Sigmoid colon (tissue), 7 donors: ENCODE measurements at regions of chrX and their contacts with region 1.

Region 1: DNA sequence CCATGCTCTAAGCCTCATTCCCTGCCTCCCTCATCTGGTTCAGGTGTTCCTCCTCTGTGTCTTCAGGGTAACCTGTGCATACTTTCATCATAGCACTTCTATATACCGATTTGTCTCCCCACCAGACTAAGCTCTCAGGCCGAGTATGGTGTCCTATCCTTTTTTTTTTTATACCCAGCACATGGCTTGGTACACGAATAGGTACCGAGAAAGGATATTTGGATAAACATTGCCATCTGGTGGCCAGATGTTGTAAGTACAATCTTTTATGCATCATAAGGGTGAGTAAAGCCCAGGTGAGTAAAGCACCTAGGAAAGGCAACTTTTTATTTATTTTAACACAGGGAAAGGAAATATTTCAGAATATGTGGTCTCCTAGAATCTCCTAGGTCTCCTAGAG is 68.4 kb downstream of the MID2 start:
- DNase-seq: no peak
- H3K4me3 ChIP-seq: no peak overlapping the region
- H3K27ac ChIP-seq: no peak overlapping the region
- H3K4me1 ChIP-seq: no peaks in the 10 kb centered on the region
- H3K27me3 ChIP-seq: no peaks in the 10 kb centered on the region
- CTCF ChIP-seq: peak; percentile 23 to 45 (median 30)
- EP300 ChIP-seq: no peak
- POLR2A ChIP-seq: no peak

Region 2: GRCh38 chrX:107654872-107655761 is 238.9 kb before region 1 on chrX:
- intact Hi-C with region 1: loop called (anchors 5 kb)
- DNase-seq: peak; percentile 88
- H3K4me3 ChIP-seq: peak overlapping the region in 1 of 4 donors; percentile 9
- H3K27ac ChIP-seq: peak overlapping the region; percentile 10 to 60 (median 36)
- H3K4me1 ChIP-seq: peaks cover 0 to 13% (median 4%) of the 10 kb centered on the region in 4 donors
- H3K27me3 ChIP-seq: no peaks in the 10 kb centered on the region
- CTCF ChIP-seq: peak; percentile 43 to 66 (median 58)
- EP300 ChIP-seq: no peak
- POLR2A ChIP-seq: no peak

Region 3: DNA sequence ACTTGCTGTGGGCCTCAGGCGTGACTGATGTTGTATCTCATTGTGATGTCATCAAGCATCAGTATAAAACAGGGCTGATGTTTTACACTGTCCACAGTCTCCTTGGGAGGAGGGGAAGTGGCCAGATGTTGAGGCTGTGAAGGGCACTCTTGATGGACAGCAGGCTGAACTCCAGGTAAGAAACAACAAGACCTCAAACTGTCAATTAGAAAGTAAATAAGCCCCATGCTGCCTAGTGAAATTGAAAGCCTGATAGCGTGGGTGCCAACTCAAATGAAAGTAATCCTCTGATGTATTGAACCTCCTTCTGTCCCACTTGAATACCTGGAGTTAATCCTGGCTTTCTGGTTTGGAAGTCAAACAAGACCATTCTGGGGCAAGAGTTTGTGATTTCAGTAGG is 170.6 kb after region 1 on chrX:
- intact Hi-C with region 1: no loop called
- DNase-seq: no peak
- H3K4me3 ChIP-seq: no peak overlapping the region
- H3K27ac ChIP-seq: no peak overlapping the region
- H3K4me1 ChIP-seq: no peaks in the 10 kb centered on the region
- H3K27me3 ChIP-seq: no peaks in the 10 kb centered on the region
- CTCF ChIP-seq: no peak
- EP300 ChIP-seq: no peak
- POLR2A ChIP-seq: no peak